WTC11 (cell line): ENCODE measurements at regions of chr3 and their contacts with region 1.

Region 1: DNA sequence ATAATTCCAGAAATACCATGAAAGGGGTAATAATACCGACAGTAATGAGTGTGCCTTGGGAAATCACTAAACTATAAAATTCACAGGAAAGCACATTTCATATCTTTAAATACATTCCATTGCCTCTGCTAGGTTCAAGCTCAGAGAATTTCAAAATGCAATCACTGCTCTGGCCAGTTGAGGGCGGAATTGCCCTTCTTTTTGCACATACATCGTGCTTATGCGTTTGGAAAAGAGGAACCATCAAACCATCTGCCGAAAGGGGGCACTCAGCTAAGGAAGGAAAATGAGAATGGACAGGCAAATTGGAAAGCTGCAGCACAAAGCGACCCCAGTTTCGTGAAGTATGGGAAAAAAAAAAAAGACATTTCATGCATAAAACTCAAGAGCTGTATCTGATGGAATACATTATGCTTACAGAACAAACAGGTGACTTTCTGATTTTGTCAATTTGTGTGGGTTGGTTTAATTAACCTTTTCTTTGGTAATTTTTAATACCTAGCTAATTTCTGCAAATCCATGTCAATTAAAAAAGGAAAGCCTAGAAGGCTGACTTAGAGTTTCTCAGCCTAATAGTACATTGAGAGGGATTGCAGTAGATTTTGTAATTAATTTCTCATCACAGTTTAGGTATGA is 61.4 kb downstream of the TUSC7 start:
- DNase-seq: peak; percentile 83
- ATAC-seq: peak; percentile 91
- H3K4me3 Mint-ChIP-seq: no peak overlapping the region
- H3K27ac Mint-ChIP-seq: no peak overlapping the region
- H3K4me1 Mint-ChIP-seq: peaks cover 21% of the 10 kb centered on the region
- H3K27me3 Mint-ChIP-seq: no peaks in the 10 kb centered on the region
- CTCF ChIP-seq: peak; percentile 81

Region 2: DNA sequence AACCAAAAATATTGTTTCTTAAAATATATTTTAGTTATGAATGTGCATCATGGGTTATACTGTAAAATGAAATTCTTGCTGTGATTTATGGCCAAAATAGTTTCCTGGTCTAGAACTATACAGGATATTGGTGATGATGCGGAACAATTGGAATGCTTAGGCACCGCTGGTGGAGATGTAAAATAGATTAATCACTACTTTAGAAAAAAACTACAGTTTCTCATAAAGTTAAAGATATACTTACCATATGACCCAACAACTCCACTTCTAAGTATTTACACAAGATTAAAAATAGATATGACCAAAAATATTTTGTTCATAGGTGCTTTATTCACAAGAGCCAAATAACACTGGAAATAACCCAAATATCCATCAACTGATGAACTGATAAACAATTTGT is 65.4 kb after region 1 on chr3:
- CTCF ChIA-PET with region 1: interaction called, 16 read pairs
- POLR2A ChIA-PET with region 1: no interaction called
- DNase-seq: no peak
- ATAC-seq: no peak
- H3K4me3 Mint-ChIP-seq: no peak overlapping the region
- H3K27ac Mint-ChIP-seq: no peak overlapping the region
- H3K4me1 Mint-ChIP-seq: peaks cover 23% of the 10 kb centered on the region
- H3K27me3 Mint-ChIP-seq: no peaks in the 10 kb centered on the region
- CTCF ChIP-seq: no peak

Region 3: GRCh38 chr3:116961106-116961505 is 190.2 kb after region 1 on chr3:
- CTCF ChIA-PET with region 1: interaction called, 11 read pairs
- POLR2A ChIA-PET with region 1: no interaction called
- DNase-seq: no peak
- ATAC-seq: no peak
- H3K4me3 Mint-ChIP-seq: no peak overlapping the region
- H3K27ac Mint-ChIP-seq: no peak overlapping the region
- H3K4me1 Mint-ChIP-seq: peaks cover 4% of the 10 kb centered on the region; the same call in 1 of the 2 replicates
- H3K27me3 Mint-ChIP-seq: no peaks in the 10 kb centered on the region
- CTCF ChIP-seq: no peak

Region 4: GRCh38 chr3:117019082-117019713 is 248.3 kb after region 1 on chr3:
- CTCF ChIA-PET with region 1: interaction called, 73 read pairs
- POLR2A ChIA-PET with region 1: no interaction called
- DNase-seq: peak; percentile 70
- ATAC-seq: peak; percentile 83
- H3K4me3 Mint-ChIP-seq: no peak overlapping the region
- H3K27ac Mint-ChIP-seq: no peak overlapping the region
- H3K4me1 Mint-ChIP-seq: peaks cover 23% of the 10 kb centered on the region
- H3K27me3 Mint-ChIP-seq: no peaks in the 10 kb centered on the region
- CTCF ChIP-seq: peak; percentile 64

Region 5: DNA sequence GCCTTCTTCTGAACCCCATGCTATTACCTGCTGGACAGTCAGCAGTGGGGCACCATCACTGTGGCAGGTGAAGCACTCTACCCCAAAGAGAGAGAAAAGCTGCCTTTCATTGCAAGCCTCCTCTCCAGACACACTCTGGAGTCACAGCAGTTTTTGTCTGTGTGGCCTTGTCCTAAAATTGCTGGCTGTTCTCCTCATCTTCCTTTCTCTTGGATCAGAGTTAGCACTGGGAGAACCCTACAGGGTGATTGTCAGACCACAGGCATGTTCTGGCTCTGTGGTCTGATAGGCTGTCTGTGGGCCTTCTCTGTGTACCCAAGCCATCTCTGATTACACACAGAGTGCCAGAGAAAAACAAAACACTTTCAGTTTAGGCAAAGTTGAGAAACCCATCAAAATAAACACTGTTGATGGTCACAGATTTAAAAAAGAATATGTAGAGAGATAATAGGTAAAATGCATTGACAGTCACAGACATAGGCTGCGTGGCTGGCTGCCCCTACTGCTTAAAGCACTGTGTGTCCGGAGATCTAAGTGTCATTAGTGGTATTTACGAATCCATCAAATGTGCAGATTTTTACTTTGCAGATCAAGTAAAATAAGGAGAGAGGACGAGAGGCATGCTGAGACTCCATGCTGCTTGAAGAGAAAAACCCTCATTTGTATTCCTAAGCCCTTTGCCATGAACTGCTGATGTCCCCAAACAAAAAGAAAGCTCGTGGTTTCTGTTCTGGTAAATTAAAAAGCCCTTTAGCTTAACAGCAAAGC is 628.6 kb after region 1 on chr3:
- CTCF ChIA-PET with region 1: interaction called, 13 read pairs
- POLR2A ChIA-PET with region 1: no interaction called
- DNase-seq: no peak
- ATAC-seq: peak; percentile 74
- H3K4me3 Mint-ChIP-seq: peak overlapping the region; percentile 57
- H3K27ac Mint-ChIP-seq: peak overlapping the region; percentile 63
- H3K4me1 Mint-ChIP-seq: peaks cover 76% of the 10 kb centered on the region
- H3K27me3 Mint-ChIP-seq: peaks cover 63% of the 10 kb centered on the region
- CTCF ChIP-seq: no peak